ENCODE measurements at regions of chr16 and their contacts with region 1.

Region 1: GRCh38 chr16:86343027-86343787 is 167.1 kb upstream of the FOXF1 start:
- DNase-seq: peak; percentile 72
- H3K4me3 ChIP-seq: no peak overlapping the region
- H3K27ac ChIP-seq: peak overlapping the region; percentile 73 to 80
- H3K4me1 ChIP-seq: no peaks in the 10 kb centered on the region
- H3K27me3 ChIP-seq: no peaks in the 10 kb centered on the region
- CTCF ChIP-seq: no peak
- POLR2A ChIP-seq: no peak

Region 2: GRCh38 chr16:86072328-86073102 is 270.7 kb before region 1 on chr16:
- intact Hi-C with region 1: loop called (anchors 5 kb)
- DNase-seq: peak; percentile 53
- H3K4me3 ChIP-seq: no peak overlapping the region
- H3K27ac ChIP-seq: no peak overlapping the region
- H3K4me1 ChIP-seq: no peaks in the 10 kb centered on the region
- H3K27me3 ChIP-seq: no peaks in the 10 kb centered on the region
- CTCF ChIP-seq: peak; percentile 47 to 75 (median 65)
- POLR2A ChIP-seq: no peak

Region 3: GRCh38 chr16:86306811-86307516 is 36.2 kb before region 1 on chr16:
- intact Hi-C with region 1: loop called (anchors 5 kb)
- DNase-seq: no peak
- H3K4me3 ChIP-seq: no peak overlapping the region
- H3K27ac ChIP-seq: no peak overlapping the region
- H3K4me1 ChIP-seq: no peaks in the 10 kb centered on the region
- H3K27me3 ChIP-seq: no peaks in the 10 kb centered on the region
- CTCF ChIP-seq: no peak
- POLR2A ChIP-seq: no peak

Region 4: DNA sequence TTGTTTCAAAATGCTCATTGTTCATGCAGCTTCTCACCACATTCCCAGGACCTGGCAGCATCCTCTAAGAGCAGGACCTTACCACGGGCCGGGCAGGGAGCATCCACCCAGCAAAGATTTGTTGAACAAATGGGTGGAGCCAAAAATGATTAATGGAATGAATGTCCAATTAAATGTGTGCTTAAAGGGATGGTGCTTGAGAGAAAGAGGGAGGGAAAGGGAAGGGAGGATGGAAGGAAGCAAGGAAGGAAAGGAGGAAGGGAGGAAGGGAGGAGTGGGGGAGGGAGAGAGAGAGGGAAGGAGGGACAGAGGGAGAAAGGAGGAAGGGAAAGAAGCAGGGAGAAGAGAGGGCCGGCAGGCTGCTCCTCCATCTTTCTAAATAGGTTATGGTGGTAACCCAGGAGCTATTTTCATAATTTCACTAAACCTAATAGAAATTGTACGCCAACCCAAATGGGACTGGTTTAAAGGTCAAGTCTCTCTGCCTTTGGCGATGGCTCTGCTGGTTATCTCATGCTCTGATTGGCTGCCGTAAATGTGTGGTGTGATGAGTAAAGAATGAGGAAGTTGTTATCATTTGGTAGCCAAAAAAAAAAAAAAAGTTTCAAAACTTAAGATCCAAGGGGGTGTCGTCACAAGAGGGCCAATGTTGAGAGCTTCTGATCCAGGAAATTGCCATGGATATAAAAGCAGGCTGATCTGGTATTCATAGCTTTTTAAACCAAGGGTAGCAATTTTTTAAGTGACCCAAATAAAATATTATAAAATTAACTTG is 40.5 kb after region 1 on chr16:
- intact Hi-C with region 1: no loop called
- DNase-seq: no peak
- H3K4me3 ChIP-seq: no peak overlapping the region
- H3K27ac ChIP-seq: no peak overlapping the region
- H3K4me1 ChIP-seq: no peaks in the 10 kb centered on the region
- H3K27me3 ChIP-seq: no peaks in the 10 kb centered on the region
- CTCF ChIP-seq: no peak
- POLR2A ChIP-seq: no peak

Region 5: DNA sequence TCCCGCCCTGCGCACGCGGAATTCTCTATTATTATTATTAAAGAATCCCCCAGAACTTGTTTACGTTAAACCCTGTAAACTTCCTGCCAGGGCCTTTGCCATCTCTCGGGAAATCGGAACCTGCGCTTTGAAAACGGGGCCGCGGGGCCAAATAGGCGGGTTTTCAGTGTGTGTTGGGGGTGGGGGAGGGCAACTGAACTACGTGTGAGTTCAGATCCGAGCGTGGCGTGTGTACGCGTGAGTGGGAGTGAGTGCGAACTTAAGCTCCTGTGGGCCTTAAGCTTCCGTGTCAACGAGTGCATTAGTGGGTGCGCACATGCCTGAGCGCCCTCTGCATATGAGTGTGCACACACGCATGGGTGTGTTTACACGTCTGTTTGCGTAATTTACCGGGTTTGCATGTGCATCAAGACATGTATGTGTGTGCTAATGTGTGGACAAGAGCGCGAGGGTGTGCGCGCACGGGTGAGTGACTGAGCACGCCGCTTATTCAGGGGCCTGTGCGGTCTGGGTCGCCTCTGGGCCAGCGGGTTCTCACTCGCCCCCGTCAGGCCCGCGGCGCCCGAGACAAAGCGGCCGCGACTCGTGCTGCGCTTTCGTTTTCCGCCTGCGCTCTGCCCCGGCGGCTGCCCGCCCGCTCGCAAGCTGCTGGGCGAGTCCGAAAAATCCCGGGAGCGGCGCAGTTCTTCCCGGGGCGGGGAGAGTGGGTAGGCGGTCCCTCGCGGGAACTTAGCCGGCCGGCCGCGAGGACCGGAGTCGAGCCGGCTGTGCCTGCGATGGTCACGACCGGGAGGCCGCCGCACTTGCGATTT is 165.9 kb after region 1 on chr16:
- intact Hi-C with region 1: loop called (anchors 2 kb)
- DNase-seq: no peak
- H3K4me3 ChIP-seq: peak overlapping the region; percentile 45 to 48
- H3K27ac ChIP-seq: peak overlapping the region; percentile 85 to 87
- H3K4me1 ChIP-seq: peaks cover 8% of the 10 kb centered on the region
- H3K27me3 ChIP-seq: peaks cover 49% of the 10 kb centered on the region
- CTCF ChIP-seq: no peak
- POLR2A ChIP-seq: no peak